Esophagus muscularis mucosa (tissue), 4 donors: ENCODE measurements at regions of chr9 and their contacts with region 1.

Region 1: GRCh38 chr9:122164286-122164685 is 4.6 kb downstream of the MORN5 start:
- DNase-seq: no peak
- H3K4me3 ChIP-seq: peak overlapping the region in 1 of 4 donors; percentile 13
- H3K27ac ChIP-seq: peak overlapping the region in 3 of 4 donors; percentile 30 to 43 (median 38)
- H3K4me1 ChIP-seq: peaks cover 0 to 23% (median 18%) of the 10 kb centered on the region in 4 donors
- H3K27me3 ChIP-seq: no peaks in the 10 kb centered on the region
- CTCF ChIP-seq: no peak
- EP300 ChIP-seq: no peak
- POLR2A ChIP-seq: no peak

Region 2: DNA sequence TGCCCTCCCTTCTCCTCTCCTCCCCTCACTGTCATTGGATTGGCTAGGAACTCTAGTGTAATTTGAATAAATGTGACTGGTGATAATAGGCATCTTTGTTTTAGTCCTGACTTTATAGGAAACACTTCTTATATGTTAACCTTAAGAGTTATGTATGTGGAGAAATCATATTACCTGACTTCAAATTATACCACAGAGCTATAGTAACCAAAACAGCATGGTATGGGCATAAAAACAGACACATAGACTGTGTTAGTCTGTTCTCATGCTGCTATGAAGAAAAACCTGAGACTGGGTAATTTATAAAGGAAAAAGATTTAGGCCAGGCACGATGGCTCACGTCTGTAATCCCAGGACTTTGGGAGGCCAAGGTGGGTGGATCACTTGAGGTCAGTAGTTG is 109.8 kb after region 1 on chr9:
- intact Hi-C with region 1: loop called (anchors 5 kb)
- DNase-seq: no peak
- H3K4me3 ChIP-seq: no peak overlapping the region
- H3K27ac ChIP-seq: no peak overlapping the region
- H3K4me1 ChIP-seq: peaks cover 0 to 3% (median 0%) of the 10 kb centered on the region in 4 donors
- H3K27me3 ChIP-seq: no peaks in the 10 kb centered on the region
- CTCF ChIP-seq: no peak
- EP300 ChIP-seq: no peak
- POLR2A ChIP-seq: no peak